H1 (cell line): ENCODE measurements at regions of chr11 and their contacts with region 1.

Region 1: GRCh38 chr11:11493698-11494097 is 128.1 kb downstream of the GALNT18 start:
- DNase-seq: no peak
- H3K4me3 ChIP-seq: no peak overlapping the region
- H3K27ac ChIP-seq: no peak overlapping the region
- H3K4me1 ChIP-seq: no peaks in the 10 kb centered on the region
- H3K27me3 ChIP-seq: no peaks in the 10 kb centered on the region
- CTCF ChIP-seq: no peak
- EP300 ChIP-seq: no peak
- POLR2A ChIP-seq: no peak
- RAD21 ChIP-seq: peak; percentile 39 to 54; a peak in 3 of 4 replicates

Region 2: DNA sequence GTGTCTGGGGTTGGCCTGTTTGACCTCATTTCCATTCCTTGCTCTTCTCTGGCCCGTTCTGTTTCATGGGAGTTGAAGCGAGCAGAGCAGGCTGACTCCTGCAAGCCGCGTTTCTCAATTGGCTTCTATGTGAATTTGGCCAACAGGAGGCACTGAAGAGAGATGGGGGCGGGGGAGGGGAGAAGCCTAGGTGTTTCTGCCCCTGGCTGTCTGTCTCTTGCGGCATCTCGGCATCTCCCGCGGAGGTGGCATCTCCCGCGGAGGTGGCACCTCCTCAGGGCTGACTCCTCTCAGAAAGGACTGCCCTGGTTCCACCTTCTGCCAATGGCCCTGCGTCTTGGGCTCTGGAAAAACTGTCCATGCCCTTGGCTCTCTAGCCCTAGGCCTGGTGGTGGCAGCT is 15.0 kb before region 1 on chr11:
- CTCF ChIA-PET with region 1: interaction called, 10 read pairs
- POLR2A ChIA-PET with region 1: no interaction called
- DNase-seq: peak; percentile 33 to 54
- H3K4me3 ChIP-seq: no peak overlapping the region
- H3K27ac ChIP-seq: no peak overlapping the region
- H3K4me1 ChIP-seq: peaks cover 0 to 5% (median 2%) of the 10 kb centered on the region in 4 experiments; a peak in 3 of 7 replicates
- H3K27me3 ChIP-seq: no peaks in the 10 kb centered on the region
- CTCF ChIP-seq: peak; percentile 45 to 67 (median 59)
- EP300 ChIP-seq: no peak
- POLR2A ChIP-seq: no peak
- RAD21 ChIP-seq: peak; percentile 35 to 55